ENCODE measurements at regions of chr10 and their contacts with region 1.

Region 1: GRCh38 chr10:96842896-96843723 is 11.0 kb downstream of the LCOR start:
- DNase-seq: no peak
- H3K4me3 ChIP-seq: no peak overlapping the region
- H3K27ac ChIP-seq: peak overlapping the region; percentile 12; the same call in 1 of the 2 replicates
- H3K4me1 ChIP-seq: peaks cover 4 to 9% (median 5%) of the 10 kb centered on the region in 4 experiments; a peak in 4 of 7 replicates
- H3K27me3 ChIP-seq: no peaks in the 10 kb centered on the region
- CTCF ChIP-seq: no peak
- EP300 ChIP-seq: no peak
- POLR2A ChIP-seq: no peak
- RAD21 ChIP-seq: no peak

Region 2: DNA sequence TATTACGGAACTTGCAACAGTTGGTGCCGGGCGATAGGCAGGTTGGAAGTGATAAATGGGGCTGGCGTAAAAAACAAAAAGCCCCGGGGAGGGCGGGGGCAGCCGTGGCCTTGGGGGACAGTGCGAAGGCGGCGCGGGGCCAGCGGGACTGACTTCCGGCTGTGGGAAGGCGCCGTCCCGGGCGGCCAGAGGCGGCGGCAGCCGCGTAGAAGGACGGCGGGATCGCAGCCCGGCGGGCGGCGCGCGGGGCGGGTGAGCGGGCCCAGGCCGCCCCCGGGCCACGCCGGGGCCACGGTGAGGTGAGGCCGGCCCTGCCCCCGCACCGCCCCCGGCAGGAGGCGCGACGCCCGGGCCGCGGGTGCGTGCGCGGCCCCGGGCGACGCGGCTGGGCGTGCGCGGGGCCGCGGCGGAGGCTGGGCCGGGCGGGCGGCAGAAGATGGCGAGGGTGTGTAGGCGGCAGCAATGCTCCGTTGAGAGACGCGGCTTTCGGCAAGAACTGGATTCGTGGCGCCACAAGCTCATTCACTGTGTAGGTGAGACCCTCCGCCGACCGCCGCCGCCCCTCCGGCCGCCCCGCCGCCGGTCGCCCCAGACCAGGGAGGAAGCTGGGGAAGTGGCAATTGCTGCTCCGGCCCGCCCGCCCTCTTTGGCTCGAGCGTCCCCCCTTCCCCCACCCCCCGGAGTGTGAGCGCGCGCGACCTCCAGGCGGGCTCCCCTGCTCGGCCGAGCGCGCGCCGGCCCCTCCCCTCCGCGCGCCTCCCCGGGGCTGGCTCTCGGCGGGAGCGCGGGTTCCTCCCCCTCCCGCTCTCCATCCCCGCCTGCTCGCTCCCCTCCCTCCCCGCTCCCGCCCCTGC is 11.0 kb before region 1 on chr10 and contains the start of gene LCOR:
- CTCF ChIA-PET with region 1: interaction called, 5 read pairs
- POLR2A ChIA-PET with region 1: interaction called, 16 read pairs
- DNase-seq: peak in 1 of 2 experiments; percentile 86
- H3K4me3 ChIP-seq: peak within 1 kb of the TSS; percentile 73 to 91 (median 88)
- H3K27ac ChIP-seq: peak within 1 kb of the TSS; percentile 83; the same call in 1 of the 2 replicates
- H3K4me1 ChIP-seq: peaks cover 0 to 3% (median 0%) of the 10 kb centered on the region in 4 experiments; a peak in 2 of 7 replicates
- H3K27me3 ChIP-seq: no peaks in the 10 kb centered on the region; a peak in 1 of 7 replicates
- CTCF ChIP-seq: no peak
- EP300 ChIP-seq: no peak
- POLR2A ChIP-seq: peak; percentile 71 to 83
- RAD21 ChIP-seq: no peak
- total RNA-seq, gene LCOR: 21.9 and 25.5 TPM in 2 replicates

Region 3: GRCh38 chr10:96978621-96979154 is 135.6 kb after region 1 on chr10:
- CTCF ChIA-PET with region 1: no interaction called
- POLR2A ChIA-PET with region 1: no interaction called
- DNase-seq: no peak
- H3K4me3 ChIP-seq: no peak overlapping the region
- H3K27ac ChIP-seq: no peak overlapping the region
- H3K4me1 ChIP-seq: no peaks in the 10 kb centered on the region; a peak in 1 of 7 replicates
- H3K27me3 ChIP-seq: no peaks in the 10 kb centered on the region
- CTCF ChIP-seq: no peak
- EP300 ChIP-seq: no peak
- POLR2A ChIP-seq: no peak
- RAD21 ChIP-seq: no peak